Naive thymus-derived CD4-positive, alpha-beta T cell (primary cell): ENCODE measurements at regions of chr9 and their contacts with region 1.

Region 1: GRCh38 chr9:134067904-134068743 is at the start of gene BRD3:
- DNase-seq: peak; percentile 79 to 86 (median 85)
- ATAC-seq: peak; percentile 88
- H3K4me3 ChIP-seq: peak within 1 kb of the TSS; percentile 97
- H3K4me3 Mint-ChIP-seq: peak within 1 kb of the TSS; percentile 88 to 97 (median 91)
- H3K27ac ChIP-seq: peak within 1 kb of the TSS; percentile 95
- H3K27ac Mint-ChIP-seq: peak within 1 kb of the TSS; percentile 80 to 97 (median 90)
- H3K4me1 ChIP-seq: peaks cover 21 to 26% of the 10 kb centered on the region in 2 donors
- H3K4me1 Mint-ChIP-seq: peaks cover 15 to 42% (median 29%) of the 10 kb centered on the region in 7 donors
- H3K27me3 ChIP-seq: peaks cover 0 to 4% of the 10 kb centered on the region in 2 donors
- H3K27me3 Mint-ChIP-seq: peaks cover 5 to 29% (median 14%) of the 10 kb centered on the region in 5 donors
- total RNA-seq, gene BRD3: 29.0 to 49.7 (median 40.4) TPM

Region 2: GRCh38 chr9:132944302-132945185 is 1123.6 kb before region 1 on chr9 and contains the start of gene TSC1:
- CTCF ChIA-PET with region 1: no interaction called
- POLR2A ChIA-PET with region 1: no interaction called
- intact Hi-C with region 1: loop called (anchors 2 to 10 kb)
- DNase-seq: peak; percentile 96 to 99 (median 98)
- ATAC-seq: peak; percentile 94
- H3K4me3 ChIP-seq: peak within 1 kb of the TSS; percentile 93
- H3K4me3 Mint-ChIP-seq: peak within 1 kb of the TSS; percentile 90 to 99 (median 98)
- H3K27ac ChIP-seq: peak within 1 kb of the TSS; percentile 94
- H3K27ac Mint-ChIP-seq: peak within 1 kb of the TSS; percentile 99 to 100 (median 100)
- H3K4me1 ChIP-seq: peaks cover 8 to 14% of the 10 kb centered on the region in 2 donors
- H3K4me1 Mint-ChIP-seq: peaks cover 15 to 45% (median 27%) of the 10 kb centered on the region in 7 donors
- H3K27me3 ChIP-seq: no peaks in the 10 kb centered on the region
- H3K27me3 Mint-ChIP-seq: peaks cover 0 to 3% (median 0%) of the 10 kb centered on the region in 5 donors
- total RNA-seq, gene TSC1: 38.1 to 98.3 (median 59.6) TPM

Region 3: DNA sequence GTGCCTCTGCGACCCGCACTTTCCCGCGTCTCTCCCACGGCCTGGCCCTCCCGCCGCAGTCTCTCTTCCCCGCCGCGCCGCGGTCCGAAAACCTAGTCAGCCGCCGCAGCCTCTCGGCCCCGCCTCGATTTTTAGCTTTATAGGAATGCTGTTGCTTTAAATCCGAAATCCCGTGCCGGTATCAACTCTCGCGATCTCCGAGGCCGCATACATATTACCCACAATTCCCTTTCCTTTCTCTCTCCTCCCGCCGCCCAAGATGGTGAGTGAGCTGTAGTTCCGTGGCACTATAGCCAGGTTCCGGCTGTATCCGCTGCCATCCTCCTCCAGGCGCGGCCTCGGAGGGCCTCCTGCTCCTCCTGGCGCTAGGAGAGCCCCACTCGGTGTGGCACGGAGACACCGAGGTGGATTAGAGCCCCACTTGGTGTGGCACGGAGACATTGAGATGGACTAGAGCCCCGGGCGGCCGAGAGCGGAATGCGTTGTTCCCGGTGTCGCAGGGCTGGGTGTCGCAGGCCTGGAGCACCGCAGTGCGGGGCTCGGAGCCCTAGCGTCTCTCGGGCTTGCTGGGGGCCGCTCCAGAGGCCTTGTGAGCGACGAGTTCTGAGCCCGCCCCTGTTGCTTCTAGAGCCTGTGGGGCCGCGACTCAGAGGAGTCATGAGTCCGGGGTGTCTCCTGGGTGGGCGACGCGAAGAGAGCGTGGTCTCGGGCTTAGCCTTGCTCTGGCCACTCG is 720.0 kb before region 1 on chr9 and contains the starts of genes MED22 and RPL7A:
- CTCF ChIA-PET with region 1: no interaction called
- POLR2A ChIA-PET with region 1: no interaction called
- intact Hi-C with region 1: loop called in 1 of 2 experiments (anchors 5 kb)
- DNase-seq: peak; percentile 72 to 95 (median 92)
- ATAC-seq: peak; percentile 95
- H3K4me3 ChIP-seq: peak within 1 kb of the TSS; percentile 93
- H3K4me3 Mint-ChIP-seq: peak within 1 kb of the TSS; percentile 94 to 100 (median 98)
- H3K27ac ChIP-seq: peak within 1 kb of the TSS; percentile 98
- H3K27ac Mint-ChIP-seq: peak within 1 kb of the TSS; percentile 87 to 99 (median 97)
- H3K4me1 ChIP-seq: peaks cover 19 to 20% of the 10 kb centered on the region in 2 donors
- H3K4me1 Mint-ChIP-seq: peaks cover 23 to 46% (median 39%) of the 10 kb centered on the region in 7 donors
- H3K27me3 ChIP-seq: no peaks in the 10 kb centered on the region
- H3K27me3 Mint-ChIP-seq: peaks cover 0 to 2% (median 0%) of the 10 kb centered on the region in 5 donors
- total RNA-seq, gene MED22: 26.5 to 44.6 (median 32.8) TPM
- total RNA-seq, gene RPL7A: 2,002 to 2,815 (median 2,428) TPM

Region 4: GRCh38 chr9:134024828-134025605 is 43.1 kb before region 1 on chr9 and contains the start of gene BRD3OS:
- CTCF ChIA-PET with region 1: no interaction called
- POLR2A ChIA-PET with region 1: interaction called, 4 read pairs
- intact Hi-C with region 1: loop called (anchors 1 kb)
- DNase-seq: peak; percentile 80 to 95 (median 91)
- ATAC-seq: peak; percentile 98
- H3K4me3 ChIP-seq: peak within 1 kb of the TSS; percentile 89
- H3K4me3 Mint-ChIP-seq: peak within 1 kb of the TSS; percentile 61 to 85 (median 80)
- H3K27ac ChIP-seq: peak within 1 kb of the TSS; percentile 75
- H3K27ac Mint-ChIP-seq: peak within 1 kb of the TSS; percentile 48 to 86 (median 78)
- H3K4me1 ChIP-seq: peaks cover 5 to 7% of the 10 kb centered on the region in 2 donors
- H3K4me1 Mint-ChIP-seq: peaks cover 0 to 21% (median 12%) of the 10 kb centered on the region in 7 donors
- H3K27me3 ChIP-seq: no peaks in the 10 kb centered on the region
- H3K27me3 Mint-ChIP-seq: no peaks in the 10 kb centered on the region
- total RNA-seq, gene BRD3OS: 8.3 to 19.3 (median 12.7) TPM

Region 5: GRCh38 chr9:134163353-134164196 is 95.5 kb after region 1 on chr9:
- CTCF ChIA-PET with region 1: no interaction called
- POLR2A ChIA-PET with region 1: interaction called, 5 read pairs
- intact Hi-C with region 1: loop called (anchors 1 kb)
- DNase-seq: peak; percentile 52 to 73 (median 71)
- ATAC-seq: no peak
- H3K4me3 ChIP-seq: no peak overlapping the region
- H3K4me3 Mint-ChIP-seq: no peak overlapping the region
- H3K27ac ChIP-seq: no peak overlapping the region
- H3K27ac Mint-ChIP-seq: peak overlapping the region in 1 of 9 donors; percentile 52
- H3K4me1 ChIP-seq: peaks cover 0 to 18% of the 10 kb centered on the region in 2 donors
- H3K4me1 Mint-ChIP-seq: peaks cover 0 to 28% (median 19%) of the 10 kb centered on the region in 7 donors
- H3K27me3 ChIP-seq: no peaks in the 10 kb centered on the region
- H3K27me3 Mint-ChIP-seq: no peaks in the 10 kb centered on the region

Region 6: DNA sequence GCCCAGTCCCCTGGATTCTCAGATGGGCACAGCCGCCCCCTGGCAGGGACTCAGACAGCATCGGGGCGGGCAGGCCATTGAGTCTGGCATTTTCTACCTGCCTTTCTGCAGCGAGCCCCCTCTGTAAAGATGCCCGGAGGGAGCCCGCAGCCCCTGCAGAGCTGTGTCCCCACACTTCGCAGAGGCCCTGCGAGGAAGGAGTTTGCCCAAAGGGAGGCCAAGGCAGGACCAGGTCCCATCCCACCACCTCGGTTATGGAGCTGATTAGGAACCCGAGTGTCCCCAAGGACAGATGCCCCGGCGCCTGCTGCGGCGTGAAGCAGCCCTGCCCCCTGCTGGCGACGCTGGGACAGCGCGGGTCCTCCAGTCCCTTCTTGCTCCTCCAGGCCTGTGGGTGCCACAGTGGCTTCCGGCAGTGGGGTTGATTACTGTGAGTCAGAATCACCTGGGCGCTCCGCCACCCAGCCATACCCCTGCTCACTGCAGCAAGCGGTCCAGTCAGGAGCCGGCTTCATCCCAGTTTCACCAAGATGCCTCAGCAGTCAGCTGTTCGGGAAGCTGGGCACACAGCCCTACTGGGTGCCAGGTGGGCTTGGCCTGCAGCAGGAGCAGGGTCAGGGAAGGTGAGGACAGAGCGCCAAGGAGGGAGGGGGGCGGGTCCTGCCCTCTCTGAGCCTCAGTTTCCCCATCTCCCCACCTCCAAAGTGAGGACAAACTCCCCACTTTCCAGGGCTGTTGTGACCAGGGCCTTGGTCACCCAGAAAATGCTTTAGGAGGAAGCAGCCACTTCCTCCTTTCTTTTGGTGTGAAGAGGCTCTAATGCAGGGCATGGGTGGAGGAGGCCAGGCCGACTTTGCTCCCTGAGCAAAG is 375.3 kb after region 1 on chr9:
- CTCF ChIA-PET with region 1: no interaction called
- POLR2A ChIA-PET with region 1: no interaction called
- intact Hi-C with region 1: loop called (anchors 1 kb)
- DNase-seq: peak; percentile 72 to 86 (median 83)
- ATAC-seq: peak; percentile 98
- H3K4me3 ChIP-seq: peak overlapping the region; percentile 27
- H3K4me3 Mint-ChIP-seq: peak overlapping the region in 3 of 10 donors; percentile 21 to 47 (median 25)
- H3K27ac ChIP-seq: no peak overlapping the region
- H3K27ac Mint-ChIP-seq: peak overlapping the region in 5 of 9 donors; percentile 45 to 77 (median 46)
- H3K4me1 ChIP-seq: peaks cover 11 to 19% of the 10 kb centered on the region in 2 donors
- H3K4me1 Mint-ChIP-seq: peaks cover 8 to 20% (median 17%) of the 10 kb centered on the region in 7 donors
- H3K27me3 ChIP-seq: no peaks in the 10 kb centered on the region
- H3K27me3 Mint-ChIP-seq: peaks cover 0 to 9% (median 3%) of the 10 kb centered on the region in 5 donors

Region 7: DNA sequence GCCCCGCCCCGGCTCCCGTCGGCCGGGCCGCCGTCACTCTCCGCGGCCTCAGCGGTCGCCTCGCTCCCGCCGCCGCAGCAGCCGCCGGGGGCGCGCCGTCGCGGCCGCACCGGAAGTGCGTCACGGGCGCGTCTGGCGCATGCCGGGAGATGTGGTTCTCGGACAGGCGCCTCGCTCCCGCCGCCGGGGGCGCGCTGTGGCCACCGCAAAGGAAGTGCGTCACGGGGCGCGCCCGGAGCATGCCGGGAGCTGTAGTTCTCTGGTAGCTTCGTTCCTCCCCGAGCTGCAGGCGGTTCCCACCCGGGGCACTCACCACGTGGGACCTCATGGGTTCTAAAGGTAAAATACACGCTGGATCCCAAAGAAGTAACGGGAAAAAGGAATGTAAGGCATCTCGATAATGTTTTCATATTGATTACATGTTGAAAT is 1893.2 kb after region 1 on chr9 and contains the start of gene UBAC1:
- CTCF ChIA-PET with region 1: no interaction called
- POLR2A ChIA-PET with region 1: no interaction called
- intact Hi-C with region 1: loop called in 1 of 2 experiments (anchors 2 kb)
- DNase-seq: peak; percentile 91 to 96 (median 94)
- ATAC-seq: peak; percentile 97
- H3K4me3 ChIP-seq: peak within 1 kb of the TSS; percentile 65
- H3K4me3 Mint-ChIP-seq: peak within 1 kb of the TSS; percentile 78 to 93 (median 88)
- H3K27ac ChIP-seq: peak within 1 kb of the TSS; percentile 82
- H3K27ac Mint-ChIP-seq: peak within 1 kb of the TSS; percentile 74 to 94 (median 83)
- H3K4me1 ChIP-seq: peaks cover 15 to 16% of the 10 kb centered on the region in 2 donors
- H3K4me1 Mint-ChIP-seq: peaks cover 20 to 39% (median 30%) of the 10 kb centered on the region in 7 donors
- H3K27me3 ChIP-seq: no peaks in the 10 kb centered on the region
- H3K27me3 Mint-ChIP-seq: peaks cover 0 to 15% (median 0%) of the 10 kb centered on the region in 5 donors
- total RNA-seq, gene UBAC1: 28.6 to 36.1 (median 32.2) TPM